Activated T-helper 1 cell treated with anti-CD3 and anti-CD28 coated beads, Interleukin-12 subunit alpha, Interleukin-12 subunit beta, Interleukin-2, Interleukin-4 antibody, amounts not matched to agents 30 ng/mL and 10 ng/mL and 1 ng/mL, durations not matched to agents 14 hours and 24 hours and 36 hours (primary cell): ENCODE measurements at regions of chr1 and their contacts with region 1.

Region 1: GRCh38 chr1:27662707-27663393 is 9.1 kb downstream of the IFI6 start:
- DNase-seq: peak; percentile 83
- H3K4me3 Mint-ChIP-seq: peak overlapping the region; percentile 70
- H3K27ac Mint-ChIP-seq: peak overlapping the region; percentile 97
- H3K4me1 Mint-ChIP-seq: peaks cover 59% of the 10 kb centered on the region
- H3K27me3 Mint-ChIP-seq: no peaks in the 10 kb centered on the region

Region 2: DNA sequence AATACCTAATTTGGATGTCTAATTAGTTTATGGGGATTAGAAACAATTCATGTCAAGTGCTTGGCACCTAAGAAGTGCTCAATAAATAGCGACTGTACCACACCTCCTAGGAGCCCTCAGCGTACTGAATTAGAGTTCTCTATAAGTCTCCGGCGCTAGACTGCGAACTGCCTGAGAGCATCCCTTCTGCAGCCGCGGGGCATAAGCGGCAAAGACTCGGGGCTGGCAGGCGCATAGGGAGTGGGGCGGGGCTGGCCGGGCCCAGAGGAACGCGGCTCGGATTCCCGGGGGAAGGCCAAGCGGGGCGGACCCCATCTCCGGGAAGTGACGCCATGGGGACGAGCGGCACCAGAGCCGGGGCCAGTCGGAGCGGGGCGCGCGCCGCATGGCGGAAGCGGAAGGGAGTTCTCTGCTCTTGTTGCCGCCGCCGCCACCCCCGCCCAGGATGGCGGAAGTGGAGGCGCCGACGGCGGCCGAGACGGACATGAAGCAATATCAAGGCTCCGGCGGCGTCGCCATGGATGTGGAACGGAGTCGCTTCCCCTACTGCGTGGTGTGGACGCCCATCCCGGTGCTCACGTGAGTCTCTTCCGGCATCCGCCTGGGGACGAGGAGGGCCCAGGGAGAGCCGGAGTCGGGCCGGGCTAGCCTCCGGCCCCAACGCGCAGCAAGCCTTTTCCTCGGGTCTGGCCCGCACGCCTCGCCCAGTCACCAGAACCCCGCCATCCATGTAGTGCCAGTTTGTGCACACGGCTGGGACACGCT is 340.9 kb before region 1 on chr1 and contains the start of gene TMEM222:
- intact Hi-C with region 1: loop called (anchors 1 kb)
- DNase-seq: peak; percentile 98
- H3K4me3 Mint-ChIP-seq: peak within 1 kb of the TSS; percentile 97
- H3K27ac Mint-ChIP-seq: peak within 1 kb of the TSS; percentile 90
- H3K4me1 Mint-ChIP-seq: peaks cover 33% of the 10 kb centered on the region
- H3K27me3 Mint-ChIP-seq: no peaks in the 10 kb centered on the region
- total RNA-seq, gene TMEM222: 44.3 and 47.4 TPM in 2 replicates

Region 3: DNA sequence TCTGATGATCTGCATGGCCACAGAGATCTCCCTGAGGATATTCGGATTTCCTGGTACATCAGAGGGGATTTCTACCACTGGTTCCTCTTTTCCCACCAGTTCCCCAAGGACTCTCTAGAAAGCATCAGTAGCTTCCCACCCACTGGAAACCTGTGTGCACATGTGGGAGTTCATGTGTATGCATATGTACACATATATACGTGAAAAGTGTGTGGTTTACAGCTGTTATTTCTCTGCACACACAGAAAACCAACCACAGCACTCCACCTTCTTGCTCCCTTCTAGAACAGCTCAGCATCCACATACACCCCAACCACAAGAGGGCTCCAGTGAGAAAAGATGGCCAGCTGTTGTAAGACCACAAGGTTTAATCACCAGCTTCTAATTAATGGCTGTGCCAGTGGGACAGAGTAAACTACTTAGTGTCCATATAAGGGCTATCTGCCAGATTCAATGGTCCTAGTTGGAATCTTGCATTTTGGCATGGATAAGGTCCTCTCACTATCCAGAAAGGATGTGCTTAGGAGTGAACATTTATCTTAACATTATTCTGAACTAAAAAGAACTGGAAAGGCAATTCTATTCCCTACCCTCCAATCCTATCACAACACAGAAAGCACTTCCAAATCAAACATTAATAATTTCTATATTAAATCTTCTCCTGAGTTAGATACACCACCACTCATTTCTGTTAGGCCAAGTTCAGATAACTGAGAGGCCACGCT is 246.3 kb before region 1 on chr1:
- intact Hi-C with region 1: loop called (anchors 1 kb)
- DNase-seq: peak; percentile 44
- H3K4me3 Mint-ChIP-seq: no peak overlapping the region
- H3K27ac Mint-ChIP-seq: no peak overlapping the region
- H3K4me1 Mint-ChIP-seq: peaks cover 47% of the 10 kb centered on the region
- H3K27me3 Mint-ChIP-seq: no peaks in the 10 kb centered on the region

Region 4: GRCh38 chr1:27522432-27523351 is 140.2 kb before region 1 on chr1:
- intact Hi-C with region 1: loop called (anchors 1 kb)
- DNase-seq: peak; percentile 59
- H3K4me3 Mint-ChIP-seq: peak overlapping the region; percentile 90
- H3K27ac Mint-ChIP-seq: peak overlapping the region; percentile 97
- H3K4me1 Mint-ChIP-seq: peaks cover 79% of the 10 kb centered on the region
- H3K27me3 Mint-ChIP-seq: no peaks in the 10 kb centered on the region

Region 5: DNA sequence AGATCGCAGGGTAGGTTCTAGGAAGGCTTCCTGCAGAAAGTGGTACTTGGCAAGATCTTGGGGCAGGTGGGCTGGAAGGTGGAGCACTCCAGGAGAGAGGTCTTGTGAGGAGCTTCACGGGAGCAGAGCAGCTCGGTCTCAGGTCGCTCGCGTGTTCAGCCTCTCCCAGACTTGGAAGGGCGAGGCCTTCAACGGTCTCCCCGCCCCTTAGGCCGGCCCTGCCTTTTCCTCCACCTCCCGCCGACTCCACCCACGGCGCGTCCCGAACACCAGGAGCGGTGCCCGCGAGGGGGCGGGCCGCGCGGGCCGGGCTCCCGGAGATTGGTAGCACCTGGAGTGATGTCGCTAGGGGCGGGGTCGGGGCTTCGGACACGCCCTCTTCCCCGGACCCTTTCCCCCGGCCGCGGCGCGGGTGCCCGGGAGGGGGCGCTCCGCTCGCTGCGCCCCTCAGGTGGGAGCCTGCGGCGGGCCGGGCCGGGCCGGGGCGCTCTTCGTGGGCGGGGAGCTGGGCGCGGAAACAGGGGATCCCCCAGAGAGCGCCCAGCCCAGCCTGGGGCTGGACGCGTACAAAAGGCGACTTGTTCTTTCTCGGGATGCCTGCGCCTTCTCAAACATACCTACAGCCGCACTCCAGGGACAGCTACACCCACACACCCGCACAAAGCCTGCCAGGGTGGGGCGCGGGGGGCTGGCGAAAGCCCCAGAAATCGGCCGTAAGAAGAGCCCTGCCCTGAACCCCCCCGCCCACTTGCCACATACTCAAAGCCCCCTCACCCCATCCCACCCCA is 94.4 kb before region 1 on chr1:
- intact Hi-C with region 1: loop called (anchors 1 kb)
- DNase-seq: peak; percentile 94
- H3K4me3 Mint-ChIP-seq: peak overlapping the region; percentile 67
- H3K27ac Mint-ChIP-seq: no peak overlapping the region
- H3K4me1 Mint-ChIP-seq: peaks cover 18% of the 10 kb centered on the region
- H3K27me3 Mint-ChIP-seq: no peaks in the 10 kb centered on the region

Region 6: GRCh38 chr1:27643701-27644625 is 18.9 kb before region 1 on chr1:
- intact Hi-C with region 1: loop called (anchors 1 kb)
- DNase-seq: peak; percentile 59
- H3K4me3 Mint-ChIP-seq: no peak overlapping the region
- H3K27ac Mint-ChIP-seq: peak overlapping the region; percentile 44
- H3K4me1 Mint-ChIP-seq: peaks cover 15% of the 10 kb centered on the region
- H3K27me3 Mint-ChIP-seq: no peaks in the 10 kb centered on the region

Region 7: GRCh38 chr1:27719286-27720251 is 56.7 kb after region 1 on chr1:
- intact Hi-C with region 1: no loop called
- DNase-seq: no peak
- H3K4me3 Mint-ChIP-seq: no peak overlapping the region
- H3K27ac Mint-ChIP-seq: no peak overlapping the region
- H3K4me1 Mint-ChIP-seq: peaks cover 1% of the 10 kb centered on the region
- H3K27me3 Mint-ChIP-seq: peaks cover 18% of the 10 kb centered on the region